Heart right ventricle (tissue), 16 donors: ENCODE measurements at regions of chr1 and their contacts with region 1.

Region 1: DNA sequence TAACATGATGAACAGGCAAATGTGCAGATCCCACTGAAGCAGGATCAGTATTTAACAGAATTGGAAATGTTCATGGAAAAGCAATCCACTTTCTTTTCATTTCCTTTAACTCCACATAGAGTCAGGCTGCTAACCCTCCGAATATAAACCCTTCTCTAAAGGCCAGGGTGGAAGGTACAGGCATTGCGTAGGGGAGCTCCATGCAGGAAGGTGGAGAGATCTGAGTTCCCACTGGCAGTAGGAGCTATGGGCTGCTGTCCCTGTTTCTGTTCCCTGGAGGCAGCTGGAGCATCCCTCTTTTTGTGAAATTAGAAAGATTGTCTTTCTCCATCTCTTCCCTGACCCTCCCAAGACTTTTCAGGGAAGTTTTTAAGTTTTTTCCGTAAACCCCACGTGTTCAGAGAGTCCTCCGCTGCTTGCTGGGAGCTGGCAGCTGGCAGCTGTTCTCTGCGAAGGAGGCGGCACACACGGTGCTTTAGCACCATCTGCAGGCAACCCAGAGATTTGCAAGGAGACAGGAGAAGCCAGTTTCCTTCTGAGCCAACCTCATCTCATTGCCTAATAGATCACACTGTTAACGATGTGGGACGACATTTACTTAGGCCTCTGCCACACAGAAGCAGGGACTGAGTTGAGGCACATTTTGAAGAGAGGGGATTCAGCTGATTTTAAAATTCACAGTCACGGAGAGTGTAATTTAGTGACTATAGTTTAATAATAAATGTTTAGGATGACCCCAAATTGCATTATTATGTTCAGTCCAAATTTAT is 55.4 kb upstream of the HOOK1 start:
- DNase-seq: peak; percentile 76 to 79
- ATAC-seq: peak; percentile 92 to 96 (median 94)
- H3K4me3 ChIP-seq: peak overlapping the region in 9 of 10 donors; percentile 14 to 42 (median 29)
- H3K27ac ChIP-seq: peak overlapping the region in 9 of 10 donors; percentile 13 to 75 (median 55)
- H3K4me1 ChIP-seq: peaks cover 0 to 16% (median 7%) of the 10 kb centered on the region in 9 donors
- H3K27me3 ChIP-seq: no peaks in the 10 kb centered on the region
- CTCF ChIP-seq: peak; percentile 92 to 99 (median 96)

Region 2: DNA sequence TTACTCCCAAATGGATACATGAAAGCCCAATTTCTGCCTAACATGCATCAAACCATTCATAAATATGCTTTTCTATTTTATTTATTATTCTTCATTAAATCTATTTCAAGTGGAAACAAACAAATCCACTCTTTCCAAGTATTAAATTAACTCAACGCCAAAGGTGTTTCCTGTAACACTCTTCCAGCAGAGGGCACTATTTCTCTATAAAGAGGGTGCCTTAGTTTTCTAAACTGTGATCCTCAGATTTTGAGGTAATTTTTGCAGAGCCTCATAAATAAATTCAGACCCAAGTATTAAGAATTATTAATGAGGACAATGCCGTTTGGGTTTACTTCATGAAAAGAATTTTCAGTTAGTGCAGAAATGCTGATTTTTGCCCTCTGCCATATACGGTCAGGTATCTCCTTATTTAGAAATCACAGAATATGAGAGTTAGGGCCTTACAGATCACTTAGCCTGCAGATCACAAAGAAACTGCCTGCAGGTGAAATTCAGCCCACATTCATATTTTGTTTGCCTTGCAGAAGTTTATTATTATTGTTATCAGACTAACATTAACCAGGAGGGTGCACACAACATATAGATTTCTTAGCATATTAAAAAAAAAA is 1019.4 kb before region 1 on chr1:
- intact Hi-C with region 1: loop called in 9 of 10 experiments (anchors 2 to 10 kb)
- DNase-seq: peak in 1 of 2 donors; percentile 52
- ATAC-seq: peak in 6 of 8 donors; percentile 49 to 76 (median 64)
- H3K4me3 ChIP-seq: no peak overlapping the region
- H3K27ac ChIP-seq: no peak overlapping the region
- H3K4me1 ChIP-seq: peaks cover 0 to 24% (median 3%) of the 10 kb centered on the region in 9 donors
- H3K27me3 ChIP-seq: no peaks in the 10 kb centered on the region
- CTCF ChIP-seq: peak; percentile 73 to 95 (median 86)

Region 3: GRCh38 chr1:58768971-58769808 is 990.2 kb before region 1 on chr1:
- intact Hi-C with region 1: loop called in 1 of 10 experiments (anchors 10 kb)
- DNase-seq: peak; percentile 85 to 86
- ATAC-seq: peak in 3 of 8 donors; percentile 30 to 42 (median 37)
- H3K4me3 ChIP-seq: no peak overlapping the region
- H3K27ac ChIP-seq: no peak overlapping the region
- H3K4me1 ChIP-seq: peaks cover 8 to 30% (median 23%) of the 10 kb centered on the region in 9 donors
- H3K27me3 ChIP-seq: no peaks in the 10 kb centered on the region
- CTCF ChIP-seq: peak; percentile 68 to 91 (median 89)

Region 4: GRCh38 chr1:59707178-59707791 is 52.1 kb before region 1 on chr1:
- intact Hi-C with region 1: loop called in 7 of 10 experiments (anchors 1 to 10 kb)
- DNase-seq: peak in 1 of 2 donors; percentile 51
- ATAC-seq: peak; percentile 78 to 91 (median 84)
- H3K4me3 ChIP-seq: no peak overlapping the region
- H3K27ac ChIP-seq: peak overlapping the region; percentile 7 to 87 (median 60)
- H3K4me1 ChIP-seq: peaks cover 3 to 57% (median 45%) of the 10 kb centered on the region in 9 donors
- H3K27me3 ChIP-seq: no peaks in the 10 kb centered on the region
- CTCF ChIP-seq: no peak